ENCODE measurements at regions of chr17 and their contacts with region 1.

Region 1: DNA sequence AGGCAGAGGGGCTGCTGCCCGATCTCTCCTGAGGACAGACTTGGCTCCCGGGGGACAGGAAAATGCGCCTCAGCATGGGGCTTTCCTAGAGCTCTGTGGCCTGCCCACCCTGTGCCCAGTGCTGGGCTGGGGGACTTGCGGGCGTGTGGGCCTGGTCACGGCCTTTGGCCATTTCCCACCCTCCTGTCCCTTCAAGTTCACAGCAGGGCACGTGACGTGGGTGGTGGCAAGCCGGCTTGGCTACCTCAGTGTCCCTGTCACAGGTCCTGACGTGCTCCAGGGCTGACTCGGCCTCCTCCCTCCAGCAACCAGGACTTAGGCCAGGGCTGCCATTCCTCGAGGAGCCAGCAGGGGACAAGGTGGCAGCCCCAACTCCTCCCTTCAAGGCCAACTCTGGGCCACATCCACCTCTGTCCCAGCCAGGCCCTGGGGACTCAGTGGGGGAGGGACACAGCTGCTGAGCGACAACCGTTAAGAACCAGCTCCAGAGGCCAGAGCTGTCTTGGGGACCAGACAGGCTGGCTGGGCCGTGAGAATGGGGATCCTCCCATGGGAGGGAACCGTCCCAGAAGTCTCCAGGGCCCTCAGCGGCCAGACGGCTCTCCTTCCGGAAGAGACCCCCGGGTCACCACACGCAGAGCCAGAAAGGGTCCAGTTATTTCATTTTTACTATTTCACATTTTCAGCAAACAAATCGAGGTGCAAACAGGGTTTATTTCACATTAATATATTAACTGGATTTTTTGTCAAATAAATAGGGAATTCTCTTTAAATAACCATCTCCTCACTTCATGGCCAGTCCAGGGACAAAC is 1.1 kb upstream of the UNC13D start:
- DNase-seq: peak in 8 of 9 experiments; percentile 29 to 76 (median 61)
- ATAC-seq: peak; percentile 48
- H3K4me3 ChIP-seq: no peak overlapping the region
- H3K4me3 Mint-ChIP-seq: peak overlapping the region; percentile 71
- H3K27ac ChIP-seq: peak overlapping the region; percentile 44 to 93
- H3K27ac Mint-ChIP-seq: peak overlapping the region; percentile 64
- H3K4me1 ChIP-seq: peaks cover 35% of the 10 kb centered on the region
- H3K4me1 Mint-ChIP-seq: peaks cover 31% of the 10 kb centered on the region
- H3K27me3 ChIP-seq: no peaks in the 10 kb centered on the region
- H3K27me3 Mint-ChIP-seq: no peaks in the 10 kb centered on the region
- CTCF ChIP-seq: peak; percentile 65

Region 2: GRCh38 chr17:75764711-75765421 is 80.4 kb before region 1 on chr17 and contains the start of gene GALK1:
- CTCF ChIA-PET with region 1: interaction called, 6 read pairs
- POLR2A ChIA-PET with region 1: interaction called, 3 read pairs
- intact Hi-C with region 1: loop called in 1 of 2 experiments (anchors 1 kb)
- DNase-seq: peak; percentile 46 to 89 (median 70)
- ATAC-seq: peak; percentile 94
- H3K4me3 ChIP-seq: peak within 1 kb of the TSS; percentile 62 to 86
- H3K4me3 Mint-ChIP-seq: peak within 1 kb of the TSS; percentile 74
- H3K27ac ChIP-seq: peak within 1 kb of the TSS; percentile 51 to 63
- H3K27ac Mint-ChIP-seq: peak within 1 kb of the TSS; percentile 55
- H3K4me1 ChIP-seq: peaks cover 16% of the 10 kb centered on the region
- H3K4me1 Mint-ChIP-seq: peaks cover 8% of the 10 kb centered on the region
- H3K27me3 ChIP-seq: no peaks in the 10 kb centered on the region
- H3K27me3 Mint-ChIP-seq: no peaks in the 10 kb centered on the region
- CTCF ChIP-seq: peak; percentile 40
- total RNA-seq, gene GALK1: 3.4 to 3.7 TPM

Region 3: GRCh38 chr17:75779231-75779986 is 65.8 kb before region 1 on chr17:
- CTCF ChIA-PET with region 1: interaction called, 10 read pairs
- POLR2A ChIA-PET with region 1: interaction called, 53 read pairs
- intact Hi-C with region 1: no loop called
- DNase-seq: peak; percentile 87 to 99 (median 93)
- ATAC-seq: peak; percentile 66
- H3K4me3 ChIP-seq: peak overlapping the region; percentile 87
- H3K4me3 Mint-ChIP-seq: peak overlapping the region; percentile 93
- H3K27ac ChIP-seq: peak overlapping the region; percentile 97
- H3K27ac Mint-ChIP-seq: peak overlapping the region; percentile 98
- H3K4me1 ChIP-seq: peaks cover 44% of the 10 kb centered on the region
- H3K4me1 Mint-ChIP-seq: peaks cover 46% of the 10 kb centered on the region
- H3K27me3 ChIP-seq: no peaks in the 10 kb centered on the region
- H3K27me3 Mint-ChIP-seq: no peaks in the 10 kb centered on the region
- CTCF ChIP-seq: no peak

Region 4: DNA sequence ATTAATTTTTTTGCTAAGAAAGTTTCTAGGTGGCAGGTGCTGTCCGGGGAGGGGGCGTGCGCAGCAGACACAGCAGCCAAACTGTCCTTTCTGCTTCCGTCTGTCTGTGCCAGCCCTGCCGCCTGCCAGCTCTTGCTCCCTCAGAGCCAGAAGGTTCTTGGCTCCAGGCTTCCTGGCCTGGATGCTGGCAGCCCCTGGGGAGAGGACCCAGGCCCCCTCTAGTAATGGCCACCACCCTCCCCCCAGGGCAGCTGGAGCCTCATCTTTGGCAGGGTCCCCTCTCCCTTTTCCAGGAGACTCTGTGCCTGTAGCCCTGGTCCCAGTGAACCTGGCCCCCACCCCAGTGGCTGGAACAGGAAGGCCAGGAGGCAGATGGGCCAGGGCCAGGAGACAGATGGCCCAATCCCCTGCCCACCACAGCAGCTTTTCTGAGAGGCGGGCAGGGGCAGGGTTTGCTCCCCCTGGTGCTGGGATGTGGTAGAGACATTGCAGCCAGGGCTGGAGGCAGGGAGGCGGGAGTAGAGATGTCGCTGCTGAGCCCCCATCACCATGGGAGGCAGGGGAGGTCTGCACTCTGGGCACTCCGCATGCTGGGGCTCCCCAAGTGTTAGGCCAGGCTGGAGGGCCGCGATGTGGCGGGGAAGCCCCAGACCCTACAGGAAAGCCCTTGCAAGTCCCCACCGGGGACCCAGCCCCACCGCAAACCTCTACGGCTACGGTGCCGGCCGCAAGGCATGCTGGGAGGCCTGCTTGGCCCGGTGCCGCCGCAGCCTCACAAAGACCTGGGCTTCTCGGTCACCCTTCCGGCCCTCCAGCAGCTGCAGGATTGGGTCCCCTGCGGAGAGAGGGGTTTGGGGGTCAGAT is 17.8 kb before region 1 on chr17:
- CTCF ChIA-PET with region 1: interaction called, 17 read pairs
- POLR2A ChIA-PET with region 1: interaction called, 13 read pairs
- intact Hi-C with region 1: loop called in 1 of 2 experiments (anchors 1 kb)
- DNase-seq: peak in 8 of 9 experiments; percentile 46 to 85 (median 72)
- ATAC-seq: peak; percentile 66
- H3K4me3 ChIP-seq: peak overlapping the region; percentile 33 to 39
- H3K4me3 Mint-ChIP-seq: peak overlapping the region; percentile 55
- H3K27ac ChIP-seq: peak overlapping the region; percentile 50 to 78
- H3K27ac Mint-ChIP-seq: peak overlapping the region; percentile 88
- H3K4me1 ChIP-seq: peaks cover 31% of the 10 kb centered on the region
- H3K4me1 Mint-ChIP-seq: peaks cover 21% of the 10 kb centered on the region
- H3K27me3 ChIP-seq: no peaks in the 10 kb centered on the region
- H3K27me3 Mint-ChIP-seq: no peaks in the 10 kb centered on the region
- CTCF ChIP-seq: peak; percentile 65

Region 5: GRCh38 chr17:75861927-75862317 is 16.7 kb after region 1 on chr17:
- CTCF ChIA-PET with region 1: interaction called, 23 read pairs
- POLR2A ChIA-PET with region 1: interaction called, 3 read pairs
- intact Hi-C with region 1: no loop called
- DNase-seq: no peak
- ATAC-seq: no peak
- H3K4me3 ChIP-seq: no peak overlapping the region
- H3K4me3 Mint-ChIP-seq: no peak overlapping the region
- H3K27ac ChIP-seq: no peak overlapping the region
- H3K27ac Mint-ChIP-seq: no peak overlapping the region
- H3K4me1 ChIP-seq: peaks cover 16% of the 10 kb centered on the region
- H3K4me1 Mint-ChIP-seq: peaks cover 23% of the 10 kb centered on the region
- H3K27me3 ChIP-seq: no peaks in the 10 kb centered on the region
- H3K27me3 Mint-ChIP-seq: no peaks in the 10 kb centered on the region
- CTCF ChIP-seq: no peak

Region 6: DNA sequence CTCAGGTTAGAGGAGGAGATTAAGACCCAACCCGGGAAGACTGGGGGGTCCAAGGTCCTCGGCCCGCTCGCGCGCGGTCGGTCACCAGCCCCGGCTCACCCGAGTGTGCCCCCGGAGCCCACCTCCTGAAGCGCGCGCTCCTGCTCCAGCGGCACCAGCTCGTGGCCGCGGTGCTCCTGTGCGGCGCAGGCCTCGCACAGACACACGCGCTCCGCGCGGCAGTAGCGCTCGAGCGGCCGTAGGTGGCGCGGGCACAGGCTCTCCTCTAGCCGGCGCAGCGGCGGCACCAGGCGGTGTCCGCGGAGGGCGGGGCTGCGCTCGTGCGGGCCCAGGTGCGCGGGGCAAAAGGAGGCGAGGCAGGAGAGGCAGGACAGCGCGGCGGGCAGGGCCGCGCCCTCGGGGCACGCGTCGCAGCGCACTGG is 32.5 kb after region 1 on chr17:
- CTCF ChIA-PET with region 1: interaction called, 13 read pairs
- POLR2A ChIA-PET with region 1: interaction called, 8 read pairs
- intact Hi-C with region 1: no loop called
- DNase-seq: peak; percentile 44 to 85 (median 72)
- ATAC-seq: peak; percentile 67
- H3K4me3 ChIP-seq: peak overlapping the region; percentile 41 to 60
- H3K4me3 Mint-ChIP-seq: peak overlapping the region; percentile 88
- H3K27ac ChIP-seq: peak overlapping the region in 1 of 2 experiments; percentile 0
- H3K27ac Mint-ChIP-seq: peak overlapping the region; percentile 80
- H3K4me1 ChIP-seq: peaks cover 42% of the 10 kb centered on the region
- H3K4me1 Mint-ChIP-seq: peaks cover 46% of the 10 kb centered on the region
- H3K27me3 ChIP-seq: peaks cover 0 to 8% of the 10 kb centered on the region in 2 experiments
- H3K27me3 Mint-ChIP-seq: no peaks in the 10 kb centered on the region
- CTCF ChIP-seq: peak; percentile 69

Region 7: GRCh38 chr17:75896415-75897159 is 51.3 kb after region 1 on chr17 and contains the start of gene TRIM65:
- CTCF ChIA-PET with region 1: interaction called, 17 read pairs
- POLR2A ChIA-PET with region 1: interaction called, 4 read pairs
- intact Hi-C with region 1: no loop called
- DNase-seq: peak; percentile 51 to 88 (median 78)
- ATAC-seq: peak; percentile 86
- H3K4me3 ChIP-seq: peak within 1 kb of the TSS; percentile 61 to 73
- H3K4me3 Mint-ChIP-seq: peak within 1 kb of the TSS; percentile 79
- H3K27ac ChIP-seq: peak within 1 kb of the TSS; percentile 47 to 66
- H3K27ac Mint-ChIP-seq: peak within 1 kb of the TSS; percentile 80
- H3K4me1 ChIP-seq: peaks cover 20% of the 10 kb centered on the region
- H3K4me1 Mint-ChIP-seq: peaks cover 27% of the 10 kb centered on the region
- H3K27me3 ChIP-seq: no peaks in the 10 kb centered on the region
- H3K27me3 Mint-ChIP-seq: no peaks in the 10 kb centered on the region
- CTCF ChIP-seq: peak; percentile 39
- total RNA-seq, gene TRIM65: 13.6 to 15.1 TPM

Region 8: GRCh38 chr17:75950821-75951554 is 105.7 kb after region 1 on chr17:
- CTCF ChIA-PET with region 1: no interaction called
- POLR2A ChIA-PET with region 1: no interaction called
- intact Hi-C with region 1: no loop called
- DNase-seq: no peak
- ATAC-seq: no peak
- H3K4me3 ChIP-seq: no peak overlapping the region
- H3K4me3 Mint-ChIP-seq: no peak overlapping the region
- H3K27ac ChIP-seq: no peak overlapping the region
- H3K27ac Mint-ChIP-seq: no peak overlapping the region
- H3K4me1 ChIP-seq: no peaks in the 10 kb centered on the region
- H3K4me1 Mint-ChIP-seq: no peaks in the 10 kb centered on the region
- H3K27me3 ChIP-seq: no peaks in the 10 kb centered on the region
- H3K27me3 Mint-ChIP-seq: no peaks in the 10 kb centered on the region
- CTCF ChIP-seq: no peak